Activated naive CD4-positive, alpha-beta T cell treated with anti-CD3 and anti-CD28 coated beads for 36 hours (primary cell): ENCODE measurements at regions of chr13 and their contacts with region 1.

Region 1: DNA sequence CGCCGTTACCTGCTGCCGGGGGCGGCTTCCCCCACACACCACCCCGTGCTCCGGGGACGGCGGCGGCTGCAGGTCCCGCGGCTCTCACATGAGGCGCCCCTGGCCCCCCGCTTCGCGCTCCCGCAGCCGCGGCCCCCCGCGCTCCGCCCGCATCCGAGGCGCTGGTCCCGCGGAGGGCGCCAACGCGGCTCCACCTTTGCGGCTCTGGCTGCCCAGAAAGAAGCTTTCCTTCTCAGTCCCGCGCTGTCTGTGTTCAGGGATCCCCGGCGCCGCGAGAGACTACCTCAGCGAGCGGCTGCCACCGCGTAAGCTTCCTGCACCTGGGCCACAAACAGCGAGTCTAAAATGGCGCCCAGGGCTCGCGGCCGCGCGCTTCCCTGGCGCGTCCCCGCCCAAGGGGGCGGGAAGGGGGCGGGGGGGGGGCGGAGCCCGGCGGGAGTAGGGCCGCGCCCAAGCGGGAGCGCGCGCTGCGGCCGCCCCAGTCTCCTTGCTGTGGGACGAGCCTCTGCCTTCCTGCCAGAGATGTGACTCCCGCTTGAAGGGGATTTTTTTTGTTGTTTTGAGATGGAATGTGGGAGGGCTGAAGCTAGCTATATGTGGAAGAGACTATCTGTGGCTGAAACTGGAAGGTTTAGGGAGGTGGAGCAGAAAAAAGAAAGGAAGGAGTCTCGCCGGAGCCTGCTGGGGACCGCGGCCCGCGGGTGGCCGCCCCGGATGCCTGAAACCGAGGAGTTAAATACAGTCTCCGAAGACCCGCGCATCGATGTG is at the start of gene FBXL3:
- DNase-seq: peak; percentile 83
- H3K4me3 Mint-ChIP-seq: peak within 1 kb of the TSS; percentile 91
- H3K27ac Mint-ChIP-seq: peak within 1 kb of the TSS; percentile 93
- H3K4me1 Mint-ChIP-seq: peaks cover 42% of the 10 kb centered on the region
- H3K27me3 Mint-ChIP-seq: no peaks in the 10 kb centered on the region
- total RNA-seq, gene FBXL3: 27.1 to 27.4 TPM

Region 2: GRCh38 chr13:76828316-76828741 is 198.7 kb before region 1 on chr13:
- CTCF ChIA-PET with region 1: no interaction called
- intact Hi-C with region 1: loop called (anchors 1 kb)
- DNase-seq: peak; percentile 60
- H3K4me3 Mint-ChIP-seq: no peak overlapping the region
- H3K27ac Mint-ChIP-seq: peak overlapping the region; percentile 69
- H3K4me1 Mint-ChIP-seq: peaks cover 12% of the 10 kb centered on the region
- H3K27me3 Mint-ChIP-seq: no peaks in the 10 kb centered on the region

Region 3: DNA sequence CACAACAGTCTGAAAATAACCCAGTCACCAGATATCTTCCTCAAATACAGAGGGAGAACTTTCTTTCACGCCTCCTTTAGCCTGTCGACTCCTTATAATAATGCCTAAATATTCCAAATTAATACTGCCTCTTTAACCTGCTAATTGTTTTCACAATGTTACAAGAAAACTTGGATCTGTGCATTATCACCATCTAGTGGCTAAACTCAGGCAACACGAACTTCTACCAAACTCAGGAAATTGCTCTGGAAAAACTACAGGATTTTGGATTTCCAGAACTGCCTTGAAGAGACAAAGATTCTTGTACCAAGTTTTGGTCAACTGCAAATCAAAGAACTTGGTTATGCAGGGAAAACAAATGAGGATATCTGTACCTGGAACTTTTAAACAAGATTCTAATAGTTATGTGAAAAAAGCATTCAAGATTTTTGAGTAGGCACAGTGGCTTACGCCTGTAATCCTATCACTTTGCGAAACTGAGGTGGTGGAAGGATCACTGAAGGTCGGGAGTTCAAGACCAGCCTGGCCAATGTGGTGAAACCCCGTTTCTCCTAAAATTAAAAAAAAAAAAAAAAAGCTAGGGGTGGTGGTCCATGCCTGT is 24.3 kb before region 1 on chr13:
- CTCF ChIA-PET with region 1: interaction called, 10 read pairs
- intact Hi-C with region 1: no loop called
- DNase-seq: no peak
- H3K4me3 Mint-ChIP-seq: no peak overlapping the region
- H3K27ac Mint-ChIP-seq: peak overlapping the region; percentile 0
- H3K4me1 Mint-ChIP-seq: peaks cover 40% of the 10 kb centered on the region
- H3K27me3 Mint-ChIP-seq: no peaks in the 10 kb centered on the region

Region 4: GRCh38 chr13:77184455-77184854 is 157.5 kb after region 1 on chr13:
- CTCF ChIA-PET with region 1: no interaction called
- intact Hi-C with region 1: loop called (anchors 2 kb)
- DNase-seq: peak; percentile 76
- H3K4me3 Mint-ChIP-seq: no peak overlapping the region
- H3K27ac Mint-ChIP-seq: peak overlapping the region; percentile 20
- H3K4me1 Mint-ChIP-seq: peaks cover 16% of the 10 kb centered on the region
- H3K27me3 Mint-ChIP-seq: no peaks in the 10 kb centered on the region

Region 5: DNA sequence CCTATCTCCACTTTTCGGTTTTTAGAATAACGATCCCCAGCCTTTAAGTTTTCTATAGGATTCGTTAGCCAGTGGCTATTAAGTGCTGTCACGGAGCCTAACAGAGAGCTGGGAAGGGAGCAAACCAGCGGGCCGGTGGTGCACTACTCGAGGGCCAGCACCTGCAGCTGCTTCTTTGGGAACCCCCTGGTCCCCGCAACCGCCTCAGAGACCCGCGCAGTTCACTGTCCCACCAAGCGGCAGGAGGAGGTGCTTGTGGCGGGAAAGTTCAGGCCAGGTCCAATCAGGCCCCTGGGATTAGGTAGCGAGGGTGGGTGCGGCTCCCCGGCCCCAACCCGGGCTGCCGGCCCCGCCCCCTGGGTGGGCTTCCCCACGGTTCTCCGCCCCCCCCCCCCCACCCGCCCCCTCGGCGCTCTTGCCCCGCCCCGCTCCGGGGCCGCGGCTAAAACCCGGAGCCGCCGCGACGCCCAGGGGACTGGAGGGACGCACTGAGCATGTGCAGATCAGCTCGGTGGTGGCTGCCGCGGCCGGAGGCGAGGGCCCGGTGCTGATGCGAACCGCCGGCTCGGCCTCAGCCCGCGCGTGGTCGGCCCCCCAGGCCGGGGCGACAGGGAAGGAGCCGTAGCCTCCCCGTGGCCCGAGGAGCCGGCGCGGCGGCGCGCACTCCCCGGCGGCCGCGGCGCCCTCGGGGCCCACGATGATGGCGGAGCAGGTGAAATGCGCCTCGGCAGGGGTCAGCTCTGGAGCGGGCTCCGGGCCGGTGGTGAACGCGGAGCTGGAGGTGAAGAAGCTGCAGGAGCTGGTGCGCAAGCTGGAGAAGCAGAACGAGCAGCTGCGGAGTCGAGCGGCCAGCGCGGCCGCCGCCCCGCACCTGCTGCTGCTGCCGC is 670.5 kb after region 1 on chr13 and contains the start of gene SLAIN1:
- CTCF ChIA-PET with region 1: no interaction called
- intact Hi-C with region 1: loop called (anchors 1 kb)
- DNase-seq: peak; percentile 79
- H3K4me3 Mint-ChIP-seq: peak within 1 kb of the TSS; percentile 96
- H3K27ac Mint-ChIP-seq: peak within 1 kb of the TSS; percentile 59
- H3K4me1 Mint-ChIP-seq: peaks cover 30% of the 10 kb centered on the region
- H3K27me3 Mint-ChIP-seq: no peaks in the 10 kb centered on the region
- total RNA-seq, gene SLAIN1: 18.0 to 21.7 TPM

Region 6: GRCh38 chr13:78658635-78659449 is 1631.8 kb after region 1 on chr13 and contains the start of gene OBI1:
- CTCF ChIA-PET with region 1: no interaction called
- intact Hi-C with region 1: loop called (anchors 10 kb)
- DNase-seq: peak; percentile 90
- H3K4me3 Mint-ChIP-seq: peak within 1 kb of the TSS; percentile 100
- H3K27ac Mint-ChIP-seq: peak within 1 kb of the TSS; percentile 96
- H3K4me1 Mint-ChIP-seq: peaks cover 35% of the 10 kb centered on the region
- H3K27me3 Mint-ChIP-seq: no peaks in the 10 kb centered on the region
- total RNA-seq, gene OBI1: 16.0 to 17.7 TPM